Activated CD4-positive, alpha-beta T cell treated with anti-CD3 and anti-CD28 coated beads, Interleukin-2, amount 10 ng/mL, durations not matched to agents 24 days and 14 days (primary cell): ENCODE measurements at regions of chr3 and their contacts with region 1.

Region 1: GRCh38 chr3:183178629-183179549 is 16.4 kb upstream of the LAMP3 start:
- DNase-seq: peak; percentile 79
- H3K4me3 Mint-ChIP-seq: peak overlapping the region; percentile 86
- H3K27ac Mint-ChIP-seq: no peak overlapping the region
- H3K4me1 Mint-ChIP-seq: peaks cover 10% of the 10 kb centered on the region
- H3K27me3 Mint-ChIP-seq: peaks cover 37% of the 10 kb centered on the region

Region 2: GRCh38 chr3:183061431-183062172 is 117.3 kb before region 1 on chr3:
- intact Hi-C with region 1: no loop called
- DNase-seq: peak; percentile 51
- H3K4me3 Mint-ChIP-seq: no peak overlapping the region
- H3K27ac Mint-ChIP-seq: no peak overlapping the region
- H3K4me1 Mint-ChIP-seq: no peaks in the 10 kb centered on the region
- H3K27me3 Mint-ChIP-seq: no peaks in the 10 kb centered on the region

Region 3: GRCh38 chr3:183306798-183307671 is 128.1 kb after region 1 on chr3:
- intact Hi-C with region 1: no loop called
- DNase-seq: peak; percentile 79
- H3K4me3 Mint-ChIP-seq: peak overlapping the region; percentile 20
- H3K27ac Mint-ChIP-seq: peak overlapping the region; percentile 65
- H3K4me1 Mint-ChIP-seq: peaks cover 28% of the 10 kb centered on the region
- H3K27me3 Mint-ChIP-seq: no peaks in the 10 kb centered on the region

Region 4: DNA sequence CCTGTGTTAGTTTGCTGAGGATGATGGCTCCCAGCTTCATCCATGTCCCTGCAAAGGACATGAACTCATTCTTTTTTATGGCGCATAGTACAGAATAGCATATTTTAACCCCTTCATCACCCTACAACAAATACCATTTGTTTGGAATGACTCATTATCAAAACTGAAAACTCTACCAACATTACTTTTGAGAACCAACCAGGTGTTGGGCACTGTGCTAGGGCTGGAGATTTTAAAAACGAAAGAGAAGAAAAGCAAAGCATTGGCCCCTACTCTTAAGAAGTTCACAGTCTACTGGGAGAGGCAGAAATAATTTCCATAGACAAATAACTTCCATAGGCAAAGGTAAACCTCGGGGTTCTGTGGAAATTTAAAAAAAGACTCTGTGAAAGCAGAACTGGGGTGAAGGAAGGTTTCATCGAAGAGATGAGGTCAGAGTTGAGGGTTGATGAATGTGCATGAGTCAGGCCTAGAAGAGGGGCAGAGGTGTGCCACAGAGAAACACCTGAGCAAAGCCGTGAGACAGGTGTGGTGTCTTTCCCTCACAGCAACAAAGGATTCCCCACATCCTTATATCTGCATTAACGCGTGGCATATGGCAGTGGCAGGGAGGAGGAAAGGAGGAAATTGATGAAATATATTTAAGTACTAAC is 198.5 kb after region 1 on chr3:
- intact Hi-C with region 1: loop called (anchors 1 kb)
- DNase-seq: no peak
- H3K4me3 Mint-ChIP-seq: no peak overlapping the region
- H3K27ac Mint-ChIP-seq: peak overlapping the region; percentile 71
- H3K4me1 Mint-ChIP-seq: peaks cover 25% of the 10 kb centered on the region
- H3K27me3 Mint-ChIP-seq: no peaks in the 10 kb centered on the region